Activated CD8-positive, alpha-beta T cell treated with anti-CD3 and anti-CD28 coated beads for 36 hours (primary cell): ENCODE measurements at regions of chr4 and their contacts with region 1.

Region 1: DNA sequence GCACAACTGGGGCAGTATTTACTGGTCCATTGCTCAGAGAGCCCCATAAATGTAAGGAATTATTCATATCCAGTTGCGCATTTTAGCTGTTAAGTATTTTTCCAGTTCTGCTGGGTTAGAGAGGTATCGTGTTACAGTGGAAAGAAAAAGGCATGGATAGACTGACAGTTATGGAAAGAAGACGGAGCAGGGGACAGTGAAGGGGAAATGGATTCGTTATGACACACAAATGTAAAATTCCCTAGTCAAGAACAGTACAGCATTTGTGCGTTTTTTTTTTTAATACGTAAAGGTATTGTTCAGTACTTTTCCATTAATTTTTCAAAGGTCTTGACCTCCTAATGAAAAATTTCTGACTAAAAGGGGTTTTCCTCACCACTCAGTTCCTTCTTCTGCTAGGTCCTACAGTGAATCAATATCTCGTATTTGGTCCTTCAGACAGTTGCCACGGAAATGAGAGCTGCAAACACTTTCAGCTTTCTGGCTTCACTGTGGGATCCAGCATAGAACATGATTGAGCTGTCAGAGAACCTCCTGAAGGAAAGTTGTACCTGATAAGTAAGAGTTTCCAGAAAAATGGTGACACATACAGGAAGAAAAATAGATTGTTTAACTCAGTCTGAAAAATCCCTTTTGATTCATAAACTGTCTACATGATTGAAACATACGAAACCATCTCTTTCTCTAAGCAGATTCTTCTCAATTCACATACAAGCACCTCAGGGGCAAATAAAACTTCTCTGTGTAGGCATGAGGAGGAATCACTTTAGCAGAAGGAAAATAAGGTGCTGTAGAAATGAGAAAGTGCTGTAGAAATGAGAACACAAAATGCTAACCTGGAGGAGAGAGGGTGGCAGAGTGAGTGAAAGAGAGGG is 21.8 kb upstream of the BBS12 start:
- DNase-seq: peak; percentile 54
- ATAC-seq: peak; percentile 86
- H3K4me3 Mint-ChIP-seq: no peak overlapping the region
- H3K27ac Mint-ChIP-seq: peak overlapping the region; percentile 62
- H3K4me1 Mint-ChIP-seq: peaks cover 25% of the 10 kb centered on the region
- H3K27me3 Mint-ChIP-seq: peaks cover 5% of the 10 kb centered on the region
- CTCF ChIP-seq: no peak

Region 2: DNA sequence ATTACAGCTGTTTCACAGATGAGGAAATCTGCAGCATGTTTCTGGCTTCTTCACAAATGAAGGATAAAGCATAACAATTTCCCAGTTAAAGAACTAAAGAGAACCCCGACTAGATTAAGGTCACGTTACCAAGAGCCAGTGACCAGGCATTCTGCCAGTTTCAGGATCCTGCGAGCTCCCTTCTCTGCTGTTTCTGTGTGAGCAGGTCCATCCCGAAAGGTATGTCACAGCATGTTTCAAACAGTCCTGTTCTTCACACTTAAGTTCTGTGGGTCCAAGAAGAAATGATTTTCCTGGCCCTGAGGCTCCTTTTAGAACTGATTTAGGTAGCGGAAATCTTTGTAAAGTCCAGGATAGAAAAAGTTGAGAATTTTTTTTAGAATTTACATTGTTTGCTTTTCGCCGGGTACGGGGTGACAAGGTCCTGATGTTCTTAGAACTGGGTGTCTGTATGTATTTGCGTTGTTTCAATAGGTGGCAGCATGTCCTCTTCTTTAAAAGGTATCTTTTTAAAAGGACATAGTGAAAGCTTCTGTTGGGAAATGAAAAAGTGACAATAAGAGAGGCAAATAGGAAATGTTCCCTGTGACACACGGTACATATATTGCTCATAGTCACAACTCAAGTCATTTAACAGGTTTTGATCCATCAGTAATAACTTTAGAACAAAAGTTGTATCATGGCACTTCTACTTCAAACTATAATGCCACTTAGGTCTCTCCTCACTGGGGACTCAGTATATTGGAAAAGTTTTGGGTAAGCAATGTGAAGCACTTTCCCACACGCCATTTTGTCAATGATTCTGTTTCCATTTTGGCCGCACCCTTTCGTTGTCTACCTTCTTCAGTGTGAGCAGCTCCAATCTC is 108.2 kb before region 1 on chr4:
- CTCF ChIA-PET with region 1: interaction called, 13 read pairs
- POLR2A ChIA-PET with region 1: no interaction called
- intact Hi-C with region 1: no loop called
- DNase-seq: no peak
- ATAC-seq: peak; percentile 69
- H3K4me3 Mint-ChIP-seq: no peak overlapping the region
- H3K27ac Mint-ChIP-seq: no peak overlapping the region
- H3K4me1 Mint-ChIP-seq: no peaks in the 10 kb centered on the region
- H3K27me3 Mint-ChIP-seq: peaks cover 15% of the 10 kb centered on the region
- CTCF ChIP-seq: peak; percentile 42

Region 3: DNA sequence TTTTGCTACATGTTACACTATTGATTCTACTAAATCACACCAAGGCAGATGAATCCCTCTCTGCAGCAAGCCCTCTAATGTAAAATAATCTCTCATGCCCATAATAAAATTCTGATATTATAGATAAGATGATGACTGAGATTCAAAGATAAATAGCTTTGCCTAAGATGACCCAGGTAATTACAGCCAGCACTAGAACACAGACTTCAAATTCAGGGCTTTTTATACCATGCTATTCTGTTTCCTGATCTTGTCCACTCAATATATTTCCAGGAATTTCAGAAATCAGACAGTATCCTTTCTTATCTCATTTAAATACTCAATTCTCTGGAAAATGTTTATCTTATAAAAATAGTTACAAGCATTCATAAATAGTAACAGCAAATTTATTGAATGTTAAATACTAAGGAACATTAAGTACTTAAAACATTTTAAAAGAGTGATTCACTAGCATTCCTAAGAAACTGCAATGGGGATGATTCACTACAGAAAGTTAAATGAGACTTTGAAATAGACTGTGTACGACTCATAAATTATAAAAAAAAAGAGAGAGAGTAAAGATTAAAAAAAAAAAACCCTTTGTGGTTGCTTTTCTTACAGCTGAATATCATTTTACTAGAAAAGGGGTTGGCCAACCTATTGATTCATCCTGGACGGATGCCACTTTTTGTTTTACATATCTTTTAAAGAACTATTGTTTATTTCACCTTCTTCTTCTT is 44.0 kb before region 1 on chr4:
- CTCF ChIA-PET with region 1: interaction called, 4 read pairs
- POLR2A ChIA-PET with region 1: no interaction called
- intact Hi-C with region 1: loop called (anchors 5 kb)
- DNase-seq: peak; percentile 32
- ATAC-seq: peak; percentile 75
- H3K4me3 Mint-ChIP-seq: no peak overlapping the region
- H3K27ac Mint-ChIP-seq: peak overlapping the region; percentile 74
- H3K4me1 Mint-ChIP-seq: peaks cover 57% of the 10 kb centered on the region
- H3K27me3 Mint-ChIP-seq: peaks cover 7% of the 10 kb centered on the region
- CTCF ChIP-seq: no peak

Region 4: GRCh38 chr4:122953924-122954323 is 243.3 kb after region 1 on chr4:
- CTCF ChIA-PET with region 1: no interaction called
- POLR2A ChIA-PET with region 1: no interaction called
- intact Hi-C with region 1: no loop called
- DNase-seq: no peak
- ATAC-seq: no peak
- H3K4me3 Mint-ChIP-seq: no peak overlapping the region
- H3K27ac Mint-ChIP-seq: no peak overlapping the region
- H3K4me1 Mint-ChIP-seq: no peaks in the 10 kb centered on the region
- H3K27me3 Mint-ChIP-seq: no peaks in the 10 kb centered on the region
- CTCF ChIP-seq: no peak